OCI-LY7 (cell line): ENCODE measurements at regions of chr15 and their contacts with region 1.

Region 1: DNA sequence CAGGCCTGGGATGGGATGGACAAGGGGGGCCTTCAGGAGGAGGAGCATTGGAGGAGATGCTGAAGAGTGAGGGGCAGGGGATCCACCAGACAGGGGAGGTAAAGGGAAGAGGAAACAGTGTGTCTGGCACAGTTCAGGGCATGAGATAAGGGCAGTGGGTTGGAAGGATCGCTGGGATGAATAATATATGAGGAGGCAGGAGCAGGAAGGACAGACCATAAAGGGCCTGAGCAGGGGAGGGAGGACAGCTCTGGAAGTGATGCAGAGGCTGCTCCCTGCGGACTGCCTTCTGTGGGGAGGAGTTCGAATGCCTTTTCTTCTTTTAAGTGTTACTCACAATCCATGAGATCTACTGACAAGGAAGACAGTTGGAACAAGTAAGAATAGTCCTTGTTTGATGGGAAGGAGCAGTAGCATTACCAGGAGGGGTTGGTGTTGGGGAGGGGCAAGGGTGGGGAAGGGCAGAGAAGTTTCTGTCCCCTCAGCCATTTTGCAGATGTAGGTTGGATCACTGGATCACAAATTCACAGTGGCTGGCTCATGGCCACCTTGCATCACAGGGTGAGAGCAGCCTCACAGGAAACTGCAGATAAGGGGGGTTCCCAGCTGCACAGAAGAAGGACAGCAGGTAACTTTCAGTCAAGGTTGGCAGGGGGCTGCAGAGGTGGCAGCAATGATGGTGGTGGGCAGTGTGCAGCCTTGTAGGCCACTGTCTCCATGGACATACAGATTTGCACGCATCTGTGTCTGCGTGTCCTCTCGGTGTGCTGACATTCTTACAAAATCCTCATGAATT is 91.9 kb upstream of the SNRPN start:
- DNase-seq: no peak
- H3K4me3 ChIP-seq: no peak overlapping the region
- H3K27ac ChIP-seq: no peak overlapping the region
- H3K4me1 ChIP-seq: no peaks in the 10 kb centered on the region
- CTCF ChIP-seq: no peak

Region 2: GRCh38 chr15:25053000-25053815 is 190.3 kb after region 1 on chr15:
- CTCF ChIA-PET with region 1: no interaction called
- POLR2A ChIA-PET with region 1: no interaction called
- intact Hi-C with region 1: loop called (anchors 10 kb)
- DNase-seq: no peak
- H3K4me3 ChIP-seq: no peak overlapping the region
- H3K27ac ChIP-seq: no peak overlapping the region
- H3K4me1 ChIP-seq: no peaks in the 10 kb centered on the region
- CTCF ChIP-seq: no peak

Region 3: DNA sequence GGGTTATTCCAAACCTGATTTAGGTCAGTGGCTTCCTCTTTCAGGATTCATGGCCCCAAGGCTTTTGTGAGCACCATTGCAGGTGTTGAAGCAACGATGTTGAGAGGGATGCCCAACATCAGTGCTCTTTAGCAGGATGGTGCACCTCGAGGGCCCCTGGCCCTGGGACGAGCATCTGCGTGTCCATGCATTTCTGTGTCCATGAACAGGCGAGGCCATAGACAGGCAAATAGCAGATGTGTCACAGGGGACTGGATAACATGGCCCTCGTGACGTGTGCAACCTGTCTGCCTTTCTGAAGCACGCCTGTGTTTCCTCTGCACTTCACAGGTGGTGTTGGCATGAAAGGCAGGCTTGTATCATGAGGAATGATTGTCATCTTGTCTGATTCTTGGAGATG is 224.2 kb after region 1 on chr15:
- CTCF ChIA-PET with region 1: no interaction called
- POLR2A ChIA-PET with region 1: no interaction called
- intact Hi-C with region 1: no loop called
- DNase-seq: no peak
- H3K4me3 ChIP-seq: no peak overlapping the region
- H3K27ac ChIP-seq: no peak overlapping the region
- H3K4me1 ChIP-seq: no peaks in the 10 kb centered on the region
- CTCF ChIP-seq: no peak